A673 (cell line): ENCODE measurements at regions of chr5 and their contacts with region 1.

Region 1: GRCh38 chr5:98773464-98774191 is at the start of gene RGMB:
- DNase-seq: peak; percentile 99
- H3K4me3 ChIP-seq: peak within 1 kb of the TSS; percentile 85
- H3K27ac ChIP-seq: peak within 1 kb of the TSS; percentile 78
- H3K4me1 ChIP-seq: peaks cover 29% of the 10 kb centered on the region
- H3K27me3 ChIP-seq: no peaks in the 10 kb centered on the region
- CTCF ChIP-seq: no peak
- total RNA-seq, gene RGMB: 16.4 and 16.5 TPM in 2 replicates

Region 2: DNA sequence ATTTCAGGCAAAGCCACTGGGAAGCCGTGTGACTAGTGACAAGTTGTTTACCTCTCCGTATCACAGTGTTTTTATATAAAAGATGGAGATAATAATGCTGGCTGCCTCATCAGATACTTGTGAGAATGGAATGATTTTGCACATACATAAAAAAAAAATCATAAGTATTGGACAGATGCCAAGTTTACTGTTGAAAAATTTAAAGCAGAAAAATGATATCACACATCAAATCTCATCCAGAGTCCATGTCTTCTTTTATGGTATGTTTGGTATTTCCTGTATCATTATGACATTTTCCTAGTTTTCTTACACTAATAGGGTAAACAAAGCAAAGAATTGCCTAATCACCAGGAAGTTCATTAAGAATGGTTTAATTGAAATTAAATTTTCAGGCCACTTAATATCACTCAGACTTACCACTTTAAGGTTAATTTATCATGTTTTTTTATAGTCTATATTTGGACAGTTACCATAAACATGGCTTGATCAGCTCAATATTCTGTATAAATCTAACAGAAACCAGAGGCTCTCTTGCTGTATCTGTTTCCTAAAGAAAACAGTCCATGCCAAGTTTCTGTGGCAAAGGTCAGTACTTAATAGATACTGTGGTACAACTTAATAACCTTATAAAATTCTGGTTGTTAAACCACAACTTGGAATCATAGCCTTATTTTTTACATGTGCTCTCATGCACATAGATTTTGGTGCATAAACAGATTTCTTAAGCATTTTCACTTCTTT is 934.1 kb before region 1 on chr5:
- CTCF ChIA-PET with region 1: no interaction called
- POLR2A ChIA-PET with region 1: no interaction called
- intact Hi-C with region 1: loop called (anchors 5 kb)
- DNase-seq: peak; percentile 61
- H3K4me3 ChIP-seq: no peak overlapping the region
- H3K27ac ChIP-seq: no peak overlapping the region
- H3K4me1 ChIP-seq: peaks cover 20% of the 10 kb centered on the region
- H3K27me3 ChIP-seq: no peaks in the 10 kb centered on the region
- CTCF ChIP-seq: no peak

Region 3: GRCh38 chr5:98096155-98096554 is 677.5 kb before region 1 on chr5:
- CTCF ChIA-PET with region 1: no interaction called
- POLR2A ChIA-PET with region 1: no interaction called
- intact Hi-C with region 1: loop called (anchors 5 kb)
- DNase-seq: no peak
- H3K4me3 ChIP-seq: no peak overlapping the region
- H3K27ac ChIP-seq: no peak overlapping the region
- H3K4me1 ChIP-seq: no peaks in the 10 kb centered on the region
- H3K27me3 ChIP-seq: no peaks in the 10 kb centered on the region
- CTCF ChIP-seq: no peak

Region 4: DNA sequence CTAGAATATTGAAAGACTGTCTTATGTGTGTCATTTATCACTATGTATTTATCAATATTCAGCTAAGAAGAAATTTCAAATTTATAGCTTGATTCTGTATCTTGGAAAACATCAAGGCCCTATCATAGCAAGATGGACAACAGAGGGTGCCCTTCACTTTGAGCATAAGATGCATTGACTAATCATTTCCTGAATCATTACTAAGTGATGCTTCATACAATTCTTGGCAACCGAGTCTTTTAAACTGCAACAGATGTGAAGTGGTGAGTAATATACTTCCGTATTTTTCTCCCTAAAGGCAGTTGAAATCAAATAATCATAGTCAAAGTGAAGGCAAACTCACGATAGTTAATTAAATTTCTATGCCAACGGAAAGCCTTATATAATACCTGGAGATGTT is 318.7 kb before region 1 on chr5:
- CTCF ChIA-PET with region 1: no interaction called
- POLR2A ChIA-PET with region 1: no interaction called
- intact Hi-C with region 1: loop called (anchors 5 kb)
- DNase-seq: peak; percentile 64
- H3K4me3 ChIP-seq: no peak overlapping the region
- H3K27ac ChIP-seq: no peak overlapping the region
- H3K4me1 ChIP-seq: no peaks in the 10 kb centered on the region
- H3K27me3 ChIP-seq: no peaks in the 10 kb centered on the region
- CTCF ChIP-seq: no peak; the same call in 1 of the 2 replicates

Region 5: GRCh38 chr5:98700730-98701129 is 72.9 kb before region 1 on chr5:
- CTCF ChIA-PET with region 1: no interaction called
- POLR2A ChIA-PET with region 1: no interaction called
- intact Hi-C with region 1: no loop called
- DNase-seq: no peak
- H3K4me3 ChIP-seq: no peak overlapping the region
- H3K27ac ChIP-seq: no peak overlapping the region
- H3K4me1 ChIP-seq: no peaks in the 10 kb centered on the region
- H3K27me3 ChIP-seq: no peaks in the 10 kb centered on the region
- CTCF ChIP-seq: no peak

Region 6: DNA sequence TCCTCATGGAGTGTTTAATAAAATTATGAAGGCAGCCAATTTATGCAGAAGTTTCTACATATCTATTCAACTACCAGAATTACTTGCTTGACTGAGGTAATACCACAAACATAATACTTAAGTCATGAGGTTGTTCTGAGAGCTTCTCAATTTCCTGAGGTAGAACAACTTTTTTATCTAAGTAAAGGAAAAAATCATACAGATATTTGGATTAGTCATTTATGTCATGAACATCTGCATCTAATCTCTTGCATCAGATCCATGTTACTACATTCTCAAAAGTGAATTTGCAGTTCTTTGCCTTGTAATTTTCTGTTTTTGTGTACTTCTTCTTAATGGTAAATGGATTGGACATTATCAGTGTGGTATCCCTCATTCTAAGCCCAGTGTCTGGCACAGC is 60.6 kb before region 1 on chr5:
- CTCF ChIA-PET with region 1: no interaction called
- POLR2A ChIA-PET with region 1: no interaction called
- intact Hi-C with region 1: no loop called
- DNase-seq: no peak
- H3K4me3 ChIP-seq: no peak overlapping the region
- H3K27ac ChIP-seq: no peak overlapping the region
- H3K4me1 ChIP-seq: no peaks in the 10 kb centered on the region
- H3K27me3 ChIP-seq: no peaks in the 10 kb centered on the region
- CTCF ChIP-seq: no peak

Region 7: DNA sequence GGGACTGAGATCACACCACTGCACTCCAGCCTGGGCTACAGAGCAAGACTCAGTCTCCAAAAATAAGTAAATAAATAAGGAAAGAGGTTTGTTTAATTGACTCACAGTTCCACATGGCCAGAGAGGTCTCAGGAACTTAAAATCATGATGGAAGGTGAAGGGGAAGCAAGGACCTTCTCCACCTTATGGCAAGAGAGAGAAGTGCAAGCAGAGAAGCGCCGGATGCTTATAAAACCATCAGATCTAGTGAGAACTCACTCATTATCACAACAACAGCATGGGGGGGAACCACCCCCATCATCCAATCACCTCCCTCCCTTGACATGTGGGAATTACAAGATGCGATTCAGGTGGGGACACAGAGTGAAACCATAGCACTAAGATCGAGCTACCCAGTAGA is 22.9 kb before region 1 on chr5:
- CTCF ChIA-PET with region 1: no interaction called
- POLR2A ChIA-PET with region 1: no interaction called
- intact Hi-C with region 1: no loop called
- DNase-seq: peak; percentile 43
- H3K4me3 ChIP-seq: no peak overlapping the region
- H3K27ac ChIP-seq: no peak overlapping the region
- H3K4me1 ChIP-seq: no peaks in the 10 kb centered on the region
- H3K27me3 ChIP-seq: no peaks in the 10 kb centered on the region
- CTCF ChIP-seq: peak; percentile 56

Region 8: GRCh38 chr5:98928873-98929696 is 155.5 kb after region 1 on chr5 and contains the start of gene CHD1:
- CTCF ChIA-PET with region 1: no interaction called
- POLR2A ChIA-PET with region 1: no interaction called
- intact Hi-C with region 1: loop called (anchors 5 kb)
- DNase-seq: peak; percentile 99
- H3K4me3 ChIP-seq: peak within 1 kb of the TSS; percentile 85
- H3K27ac ChIP-seq: peak within 1 kb of the TSS; percentile 97
- H3K4me1 ChIP-seq: peaks cover 15% of the 10 kb centered on the region
- H3K27me3 ChIP-seq: no peaks in the 10 kb centered on the region
- CTCF ChIP-seq: no peak
- total RNA-seq, gene CHD1: 57.8 and 61.0 TPM in 2 replicates

Region 9: GRCh38 chr5:98934546-98934945 is 160.9 kb after region 1 on chr5:
- CTCF ChIA-PET with region 1: no interaction called
- POLR2A ChIA-PET with region 1: interaction called, 11 read pairs
- intact Hi-C with region 1: loop called (anchors 5 kb)
- DNase-seq: no peak
- H3K4me3 ChIP-seq: no peak overlapping the region
- H3K27ac ChIP-seq: no peak overlapping the region
- H3K4me1 ChIP-seq: peaks cover 7% of the 10 kb centered on the region
- H3K27me3 ChIP-seq: no peaks in the 10 kb centered on the region
- CTCF ChIP-seq: no peak

Region 10: DNA sequence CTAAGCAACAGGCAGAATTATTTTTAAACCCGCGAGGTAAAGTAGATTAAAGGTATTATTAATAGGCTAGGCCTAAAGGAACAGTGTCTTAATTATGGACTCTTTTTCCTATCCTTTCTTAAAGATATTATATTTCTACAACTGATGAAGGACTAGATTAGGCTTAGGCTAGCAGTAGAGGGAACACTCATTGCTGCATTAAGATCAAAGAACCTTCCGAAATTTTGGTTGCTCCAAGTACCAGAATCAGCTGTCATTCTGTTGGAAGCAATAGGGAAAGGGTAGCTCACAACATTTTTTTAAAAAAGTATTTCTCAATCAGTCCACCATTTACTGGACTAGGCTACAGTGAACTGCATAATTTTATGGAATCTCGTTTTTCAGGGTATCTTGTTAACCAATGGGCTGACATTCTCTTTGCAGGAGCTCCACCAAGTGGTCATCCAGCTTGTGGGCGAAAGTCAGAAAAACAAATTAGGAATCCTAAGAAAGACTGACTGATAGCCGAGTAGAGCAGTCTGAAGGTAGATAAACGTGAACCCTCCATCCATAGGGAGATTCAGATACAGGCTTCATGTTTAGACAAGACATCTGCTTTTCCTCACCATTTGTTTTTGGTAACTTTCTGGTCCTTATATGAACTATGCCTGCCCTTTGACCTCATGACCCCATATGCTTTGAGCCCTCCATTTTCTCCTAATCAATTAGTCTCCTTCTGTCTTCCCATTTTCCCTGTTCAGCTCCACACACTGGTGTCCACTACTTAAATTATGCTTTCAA is 258.8 kb after region 1 on chr5:
- CTCF ChIA-PET with region 1: no interaction called
- POLR2A ChIA-PET with region 1: no interaction called
- intact Hi-C with region 1: loop called (anchors 2 kb)
- DNase-seq: peak; percentile 80
- H3K4me3 ChIP-seq: peak overlapping the region; percentile 33
- H3K27ac ChIP-seq: no peak overlapping the region
- H3K4me1 ChIP-seq: peaks cover 4% of the 10 kb centered on the region
- H3K27me3 ChIP-seq: no peaks in the 10 kb centered on the region
- CTCF ChIP-seq: peak; percentile 80